ENCODE measurements at regions of chr6 and their contacts with region 1.

Region 1: DNA sequence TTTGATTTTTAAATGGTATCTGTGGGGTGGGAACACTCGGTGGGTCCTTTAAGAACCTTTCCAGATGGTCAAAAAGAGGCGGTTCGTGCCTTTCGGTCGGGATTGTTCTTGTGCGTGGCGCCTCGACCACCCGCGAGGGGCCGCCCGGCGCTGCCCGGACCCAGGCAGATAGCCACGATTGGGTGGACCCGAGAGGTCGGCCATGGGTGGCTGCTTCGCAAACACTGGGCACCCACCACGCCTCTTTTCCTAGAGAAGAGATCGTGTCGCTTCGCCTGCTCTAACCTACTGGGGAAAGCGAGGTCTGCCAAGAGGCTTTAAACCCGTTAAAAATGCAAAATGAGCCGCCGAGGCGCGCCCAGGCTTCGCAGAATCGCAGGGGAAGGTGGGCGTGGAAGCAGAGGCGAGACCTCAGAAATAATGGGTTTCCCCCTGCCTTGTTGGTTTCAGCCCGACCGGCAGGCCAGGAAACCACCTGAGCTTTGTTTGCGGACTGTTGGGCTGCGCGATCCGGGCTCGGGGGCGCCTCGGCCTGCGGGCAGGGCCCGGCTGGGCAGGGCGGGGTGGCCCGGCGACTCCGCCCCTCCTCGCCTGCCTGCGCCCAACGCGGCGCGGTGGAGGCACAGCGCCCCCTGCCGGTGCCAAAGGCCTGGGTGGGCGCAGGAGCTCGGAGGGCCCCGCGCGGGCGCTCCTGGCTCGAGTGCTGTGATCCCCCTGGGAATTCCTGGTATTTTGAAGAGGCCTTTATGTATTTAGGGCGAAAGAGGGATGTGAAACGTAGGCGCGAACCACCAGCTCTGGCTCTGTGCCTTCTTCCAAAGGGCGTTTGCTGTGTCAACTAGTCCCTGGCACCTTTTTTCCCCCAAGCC is 1.6 kb downstream of the MARCKS start:
- DNase-seq: peak; percentile 94
- H3K4me3 ChIP-seq: peak overlapping the region; percentile 50 to 79 (median 70)
- H3K27ac ChIP-seq: peak overlapping the region; percentile 89 to 99 (median 96)
- H3K4me1 ChIP-seq: peaks cover 0 to 24% (median 13%) of the 10 kb centered on the region in 4 donors
- H3K27me3 ChIP-seq: no peaks in the 10 kb centered on the region
- CTCF ChIP-seq: peak; percentile 64 to 99 (median 78)
- EP300 ChIP-seq: no peak
- POLR2A ChIP-seq: peak; percentile 62 to 72

Region 2: GRCh38 chr6:112780498-112781096 is 1078.1 kb before region 1 on chr6:
- intact Hi-C with region 1: loop called (anchors 1 kb)
- DNase-seq: peak; percentile 84
- H3K4me3 ChIP-seq: no peak overlapping the region
- H3K27ac ChIP-seq: no peak overlapping the region
- H3K4me1 ChIP-seq: no peaks in the 10 kb centered on the region
- H3K27me3 ChIP-seq: no peaks in the 10 kb centered on the region
- CTCF ChIP-seq: peak; percentile 61 to 81 (median 75)
- EP300 ChIP-seq: no peak
- POLR2A ChIP-seq: no peak

Region 3: DNA sequence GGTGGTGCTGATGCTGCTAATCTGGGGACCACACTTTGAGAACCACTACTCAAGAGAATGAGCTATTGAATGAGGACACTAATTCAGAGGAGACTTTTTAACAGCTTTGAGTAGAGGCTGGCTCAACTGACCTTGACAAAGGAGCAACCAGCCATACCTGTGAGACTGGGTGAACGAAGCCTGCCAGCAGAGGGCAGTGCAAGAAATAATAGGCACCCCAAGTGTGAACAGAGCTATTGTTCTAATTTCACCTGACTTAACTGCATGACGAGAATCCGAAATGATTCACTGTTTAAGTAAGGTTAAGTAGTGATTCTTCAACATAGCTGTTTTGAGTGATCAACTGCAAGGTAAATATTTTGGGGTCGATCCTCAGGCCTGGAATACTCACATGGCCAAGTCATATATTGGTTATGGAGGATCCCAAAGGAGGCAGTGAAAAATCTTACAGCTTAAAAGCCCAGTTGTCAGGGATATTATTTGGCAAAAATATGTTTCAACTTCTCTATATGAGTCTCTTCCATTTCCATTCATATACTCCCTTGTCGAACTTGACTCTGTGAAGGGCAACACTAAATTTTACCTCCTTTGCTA is 552.1 kb before region 1 on chr6:
- intact Hi-C with region 1: loop called (anchors 1 kb)
- DNase-seq: peak; percentile 81
- H3K4me3 ChIP-seq: no peak overlapping the region
- H3K27ac ChIP-seq: no peak overlapping the region
- H3K4me1 ChIP-seq: no peaks in the 10 kb centered on the region
- H3K27me3 ChIP-seq: no peaks in the 10 kb centered on the region
- CTCF ChIP-seq: peak; percentile 34 to 69 (median 62)
- EP300 ChIP-seq: no peak
- POLR2A ChIP-seq: no peak

Region 4: DNA sequence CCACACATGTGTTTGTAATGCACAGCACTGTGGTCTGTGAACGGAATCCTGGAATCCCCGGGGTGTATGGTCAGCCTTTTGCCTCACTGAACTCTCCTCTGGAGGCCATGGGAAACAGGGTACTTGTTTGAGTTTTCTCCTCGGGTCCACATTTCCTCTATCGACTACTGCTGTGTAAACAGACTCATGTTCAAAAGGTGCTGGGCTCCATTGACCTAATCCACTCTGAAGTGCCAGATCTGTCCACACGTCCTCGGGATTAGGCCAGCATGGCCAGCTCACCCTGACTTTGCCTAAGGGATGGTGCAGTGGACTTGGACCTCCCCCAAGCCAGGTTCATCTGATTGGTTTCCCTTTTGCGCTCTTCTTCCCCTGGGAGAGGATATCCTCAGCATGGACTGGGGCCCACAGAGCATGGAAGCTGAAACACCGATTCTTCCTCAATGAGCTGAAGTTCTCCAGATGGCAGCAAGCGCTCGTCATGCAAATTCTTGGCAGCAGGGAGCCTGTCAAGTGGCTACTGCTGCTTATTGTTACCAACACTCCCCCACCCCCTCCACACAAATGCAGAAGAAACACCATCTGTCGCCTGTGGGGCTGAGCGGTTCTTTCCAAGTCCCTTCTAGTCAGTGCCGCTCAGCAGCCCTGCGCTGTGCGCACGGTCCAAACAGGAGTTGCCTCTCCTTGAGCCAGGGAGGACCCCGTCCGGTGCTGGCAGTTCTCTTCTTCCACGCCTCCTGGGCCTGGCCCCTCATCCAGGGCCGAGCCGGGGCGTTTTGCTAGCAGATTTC is 294.1 kb before region 1 on chr6:
- intact Hi-C with region 1: loop called (anchors 2 kb)
- DNase-seq: peak; percentile 97
- H3K4me3 ChIP-seq: peak overlapping the region; percentile 19 to 44 (median 42)
- H3K27ac ChIP-seq: peak overlapping the region; percentile 76 to 91 (median 88)
- H3K4me1 ChIP-seq: peaks cover 2 to 21% (median 16%) of the 10 kb centered on the region in 4 donors
- H3K27me3 ChIP-seq: no peaks in the 10 kb centered on the region
- CTCF ChIP-seq: peak in 3 of 4 experiments; percentile 19 to 23 (median 20)
- EP300 ChIP-seq: peak; percentile 85 to 99 (median 94)
- POLR2A ChIP-seq: peak; percentile 20 to 21

Region 5: GRCh38 chr6:113879186-113880096 is 20.7 kb after region 1 on chr6:
- intact Hi-C with region 1: loop called (anchors 2 kb)
- DNase-seq: peak; percentile 77
- H3K4me3 ChIP-seq: no peak overlapping the region
- H3K27ac ChIP-seq: peak overlapping the region in 2 of 4 donors; percentile 3 to 32
- H3K4me1 ChIP-seq: peaks cover 0 to 21% (median 9%) of the 10 kb centered on the region in 4 donors
- H3K27me3 ChIP-seq: no peaks in the 10 kb centered on the region
- CTCF ChIP-seq: peak; percentile 56 to 67 (median 61)
- EP300 ChIP-seq: no peak
- POLR2A ChIP-seq: no peak